Heart right ventricle (tissue), 16 donors: ENCODE measurements at regions of chr1 and their contacts with region 1.

Region 1: GRCh38 chr1:149899460-149900293 is at the start of gene BOLA1:
- DNase-seq: peak; percentile 92 to 95
- ATAC-seq: peak; percentile 98 to 100 (median 100)
- H3K4me3 ChIP-seq: peak within 1 kb of the TSS; percentile 36 to 76 (median 64)
- H3K27ac ChIP-seq: peak within 1 kb of the TSS; percentile 63 to 92 (median 87)
- H3K4me1 ChIP-seq: peaks cover 4 to 15% (median 10%) of the 10 kb centered on the region in 9 donors
- H3K27me3 ChIP-seq: no peaks in the 10 kb centered on the region
- CTCF ChIP-seq: no peak
- total RNA-seq, gene BOLA1: 12.9 to 20.0 (median 15.8) TPM

Region 2: DNA sequence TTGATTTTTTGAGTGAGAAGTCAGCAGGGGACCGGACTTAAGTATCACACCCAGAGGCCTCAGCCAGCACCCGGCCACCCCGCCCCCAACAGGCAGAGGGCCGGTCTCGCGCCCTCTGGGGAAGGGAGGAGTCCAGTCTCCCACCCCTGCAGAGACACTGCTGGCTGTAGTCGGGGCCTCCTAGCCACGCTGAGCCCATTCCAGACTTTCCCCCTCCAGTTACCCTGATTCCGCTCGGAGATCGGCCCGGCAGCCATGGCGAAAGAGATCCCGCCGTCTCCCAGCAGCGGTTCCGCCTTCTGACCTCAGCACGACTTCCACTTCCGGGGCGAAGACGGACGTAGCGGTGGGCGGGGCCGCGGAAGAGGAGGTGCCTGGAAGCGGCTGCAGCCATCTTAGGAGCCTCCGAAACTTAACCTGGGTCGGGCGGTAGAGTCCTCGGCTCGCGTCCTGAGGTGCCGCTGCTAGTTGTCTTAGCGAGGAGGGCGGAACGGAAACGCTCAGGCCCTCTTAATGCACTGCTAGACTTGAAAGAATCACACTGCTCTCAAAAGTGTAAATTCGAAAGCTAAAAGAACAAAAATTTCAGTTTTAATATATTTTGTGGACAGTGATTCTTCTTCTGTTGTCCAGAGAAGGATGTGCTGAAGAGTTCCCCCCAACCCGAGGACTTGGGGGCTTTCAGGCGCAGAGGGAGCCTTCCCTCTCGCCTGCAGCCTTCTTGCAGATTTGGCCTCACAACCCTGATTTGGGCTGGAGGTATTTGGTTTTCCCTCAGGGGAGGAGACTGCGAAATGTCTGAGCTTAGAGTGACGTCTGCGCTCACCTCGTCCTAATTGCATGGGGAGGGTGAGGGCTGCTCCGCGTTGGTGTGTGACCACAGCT is 28.1 kb after region 1 on chr1 and contains the start of gene SF3B4:
- intact Hi-C with region 1: loop called in 4 of 10 experiments (anchors 2 to 5 kb)
- DNase-seq: peak; percentile 95 to 97
- ATAC-seq: peak; percentile 97 to 100 (median 99)
- H3K4me3 ChIP-seq: peak within 1 kb of the TSS; percentile 69 to 98 (median 88)
- H3K27ac ChIP-seq: peak within 1 kb of the TSS; percentile 91 to 98 (median 96)
- H3K4me1 ChIP-seq: peaks cover 5 to 51% (median 33%) of the 10 kb centered on the region in 9 donors
- H3K27me3 ChIP-seq: no peaks in the 10 kb centered on the region
- CTCF ChIP-seq: peak in 2 of 9 donors; percentile 24 to 29
- total RNA-seq, gene SF3B4: 19.8 to 31.9 (median 26.2) TPM

Region 3: DNA sequence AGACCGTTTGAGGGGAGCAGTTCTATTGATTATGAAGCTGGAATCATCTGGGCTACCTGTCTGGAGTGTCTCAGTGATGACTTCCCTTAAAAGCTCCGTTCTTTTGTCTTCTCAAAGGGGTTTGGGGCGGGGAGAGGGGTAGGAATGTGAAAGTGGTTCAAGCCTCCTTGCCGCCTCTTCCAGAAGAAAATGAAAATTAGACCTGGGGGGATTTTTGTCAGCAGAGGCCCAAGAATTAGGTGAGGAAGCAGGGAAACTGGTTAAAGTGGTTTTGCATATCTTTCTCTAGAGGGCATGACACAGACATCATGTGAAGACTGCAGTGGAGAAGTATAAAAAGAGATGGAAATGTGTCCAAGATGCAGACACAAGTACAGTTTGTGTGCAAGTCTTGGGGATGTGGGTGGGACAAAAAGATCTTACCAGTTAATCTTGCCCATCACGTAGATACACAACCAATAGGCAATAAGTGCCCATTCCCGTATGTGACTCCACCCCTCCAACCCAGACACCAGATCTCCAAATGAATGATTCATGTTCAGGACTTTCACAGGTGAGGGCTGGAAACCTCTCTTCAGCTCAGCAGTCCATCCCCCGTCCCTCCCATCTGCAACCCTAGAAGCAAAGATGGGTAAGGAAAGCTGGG is 37.5 kb after region 1 on chr1:
- intact Hi-C with region 1: loop called in 2 of 10 experiments (anchors 5 kb)
- DNase-seq: no peak
- ATAC-seq: no peak
- H3K4me3 ChIP-seq: peak overlapping the region in 9 of 10 donors; percentile 35 to 63 (median 49)
- H3K27ac ChIP-seq: peak overlapping the region in 6 of 10 donors; percentile 19 to 84 (median 74)
- H3K4me1 ChIP-seq: peaks cover 0 to 59% (median 40%) of the 10 kb centered on the region in 9 donors
- H3K27me3 ChIP-seq: no peaks in the 10 kb centered on the region
- CTCF ChIP-seq: no peak

Region 4: DNA sequence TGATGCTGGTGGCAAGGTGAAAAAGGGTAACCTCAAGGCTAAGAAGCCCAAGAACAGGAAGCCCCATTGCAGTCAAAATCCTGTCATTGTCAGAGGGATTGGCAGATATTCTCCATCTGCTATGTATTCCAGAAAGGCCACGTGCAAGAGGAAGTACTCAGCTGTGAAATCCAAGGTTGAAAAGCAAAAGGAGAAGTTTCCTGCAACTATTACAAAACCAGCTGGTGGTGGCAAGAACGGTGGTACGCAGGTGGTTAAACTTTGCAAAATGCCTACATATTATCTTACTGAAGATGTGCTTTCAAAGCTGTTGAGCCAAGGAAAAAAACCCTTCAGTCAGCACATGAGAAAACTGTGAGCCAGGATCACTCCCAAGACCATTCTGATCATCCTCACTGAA is 154.2 kb after region 1 on chr1:
- intact Hi-C with region 1: loop called in 4 of 10 experiments (anchors 5 to 10 kb)
- DNase-seq: no peak
- ATAC-seq: no peak
- H3K4me3 ChIP-seq: no peak overlapping the region
- H3K27ac ChIP-seq: no peak overlapping the region
- H3K4me1 ChIP-seq: peaks cover 0 to 34% (median 6%) of the 10 kb centered on the region in 9 donors
- H3K27me3 ChIP-seq: peaks cover 0 to 4% (median 0%) of the 10 kb centered on the region in 7 donors
- CTCF ChIP-seq: no peak

Region 5: GRCh38 chr1:150486964-150487762 is 587.5 kb after region 1 on chr1 and contains the start of gene TARS2:
- intact Hi-C with region 1: no loop called
- DNase-seq: peak; percentile 85 to 98
- ATAC-seq: peak; percentile 99 to 100 (median 100)
- H3K4me3 ChIP-seq: peak within 1 kb of the TSS; percentile 61 to 89 (median 79)
- H3K27ac ChIP-seq: peak within 1 kb of the TSS in 9 of 10 donors; percentile 57 to 89 (median 78)
- H3K4me1 ChIP-seq: peaks cover 6 to 15% (median 10%) of the 10 kb centered on the region in 9 donors
- H3K27me3 ChIP-seq: no peaks in the 10 kb centered on the region
- CTCF ChIP-seq: peak in 6 of 9 donors; percentile 23 to 43 (median 34)
- total RNA-seq, gene TARS2: 25.1 to 44.4 (median 37.0) TPM